ENCODE measurements at regions of chr11 and their contacts with region 1.

Region 1: GRCh38 chr11:46865340-46865739 is 19.3 kb upstream of the CKAP5 start:
- DNase-seq: no peak
- CTCF ChIP-seq: no peak

Region 2: DNA sequence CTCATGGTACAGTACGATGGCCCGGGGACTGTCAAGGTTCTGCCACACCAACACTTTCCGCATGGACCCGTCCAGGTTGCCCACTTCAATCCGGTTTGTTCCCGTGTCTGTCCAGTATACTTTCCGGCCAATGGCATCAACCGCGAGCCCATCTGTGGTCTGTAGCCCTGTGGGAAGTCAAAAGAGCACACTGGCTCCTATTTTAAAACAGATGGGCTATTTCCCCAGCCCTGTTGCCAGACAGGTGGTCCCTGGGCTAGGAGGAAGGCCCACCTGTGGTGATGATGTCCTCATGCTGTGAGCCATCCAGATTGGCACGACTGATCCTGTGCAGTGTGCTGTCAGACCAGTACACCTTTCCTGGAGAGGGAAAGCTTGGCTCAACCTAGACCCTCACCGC is 11.1 kb after region 1 on chr11:
- CTCF ChIA-PET with region 1: interaction called, 16 read pairs
- POLR2A ChIA-PET with region 1: no interaction called
- DNase-seq: no peak
- CTCF ChIP-seq: no peak

Region 3: DNA sequence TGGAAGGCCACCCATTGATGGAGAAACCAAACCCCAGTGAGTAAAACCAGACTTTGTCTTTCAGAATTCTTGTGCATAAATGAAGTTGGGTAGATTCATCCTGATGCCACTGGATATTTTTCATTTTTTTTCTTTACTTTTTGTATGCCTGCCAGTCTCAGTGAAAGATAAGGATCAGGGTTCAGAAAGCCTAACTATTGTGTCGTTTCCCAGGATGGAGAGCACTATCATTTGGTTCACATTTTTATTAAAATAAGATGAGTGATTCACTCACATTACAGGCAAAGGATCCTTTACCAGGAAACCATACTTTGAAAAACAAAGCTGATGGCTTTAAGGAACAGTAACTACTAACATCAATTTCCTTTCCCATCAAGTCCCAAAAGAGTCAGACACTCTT is 259.3 kb after region 1 on chr11:
- CTCF ChIA-PET with region 1: no interaction called
- POLR2A ChIA-PET with region 1: interaction called, 11 read pairs
- DNase-seq: no peak
- CTCF ChIP-seq: no peak